H1 (cell line): ENCODE measurements at regions of chr4 and their contacts with region 1.

Region 1: DNA sequence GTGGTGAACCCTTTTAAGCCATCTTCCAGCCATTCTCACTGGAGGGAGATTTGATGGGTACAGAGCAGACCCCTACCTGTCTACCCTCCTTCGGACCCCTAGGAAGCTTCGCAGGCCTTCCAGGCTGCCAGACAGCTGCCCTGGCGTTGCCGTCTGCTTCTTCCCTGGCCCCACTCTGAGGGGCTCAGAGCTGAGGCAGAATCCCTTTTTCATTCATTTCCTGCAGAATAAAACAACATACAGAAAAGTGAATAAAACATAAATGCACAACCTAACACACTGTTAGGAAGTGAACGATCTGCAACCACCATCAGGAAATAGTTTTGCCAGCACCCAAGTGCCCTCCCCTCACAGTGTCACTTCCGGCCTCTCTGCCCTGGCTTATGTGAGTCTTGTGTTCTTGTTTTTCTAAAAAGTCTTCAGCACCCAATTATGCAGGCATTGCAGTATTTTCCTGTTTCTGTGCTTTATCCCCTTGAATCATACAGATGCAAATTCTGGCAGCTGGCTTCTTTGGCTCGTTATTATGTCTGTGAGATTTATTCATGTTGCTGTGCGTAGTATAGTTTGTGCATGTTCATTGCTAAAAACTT is 5.6 kb upstream of the ADD1 start:
- DNase-seq: no peak
- H3K4me3 ChIP-seq: no peak overlapping the region
- H3K27ac ChIP-seq: no peak overlapping the region
- H3K4me1 ChIP-seq: peaks cover 2 to 11% (median 6%) of the 10 kb centered on the region in 4 experiments
- H3K27me3 ChIP-seq: no peaks in the 10 kb centered on the region
- CTCF ChIP-seq: no peak
- EP300 ChIP-seq: no peak
- POLR2A ChIP-seq: no peak
- RAD21 ChIP-seq: no peak

Region 2: GRCh38 chr4:2785613-2786012 is 52.4 kb before region 1 on chr4:
- CTCF ChIA-PET with region 1: no interaction called
- POLR2A ChIA-PET with region 1: no interaction called
- DNase-seq: no peak
- H3K4me3 ChIP-seq: no peak overlapping the region
- H3K27ac ChIP-seq: no peak overlapping the region
- H3K4me1 ChIP-seq: peaks cover 0 to 10% (median 3%) of the 10 kb centered on the region in 4 experiments; a peak in 6 of 7 replicates
- H3K27me3 ChIP-seq: 0 out of 7 replicates have a peak, but pooled peaks cover 0 to 2% (median 0%) of the 10 kb centered on the region in 4 experiments
- CTCF ChIP-seq: no peak
- EP300 ChIP-seq: no peak
- POLR2A ChIP-seq: no peak
- RAD21 ChIP-seq: no peak

Region 3: DNA sequence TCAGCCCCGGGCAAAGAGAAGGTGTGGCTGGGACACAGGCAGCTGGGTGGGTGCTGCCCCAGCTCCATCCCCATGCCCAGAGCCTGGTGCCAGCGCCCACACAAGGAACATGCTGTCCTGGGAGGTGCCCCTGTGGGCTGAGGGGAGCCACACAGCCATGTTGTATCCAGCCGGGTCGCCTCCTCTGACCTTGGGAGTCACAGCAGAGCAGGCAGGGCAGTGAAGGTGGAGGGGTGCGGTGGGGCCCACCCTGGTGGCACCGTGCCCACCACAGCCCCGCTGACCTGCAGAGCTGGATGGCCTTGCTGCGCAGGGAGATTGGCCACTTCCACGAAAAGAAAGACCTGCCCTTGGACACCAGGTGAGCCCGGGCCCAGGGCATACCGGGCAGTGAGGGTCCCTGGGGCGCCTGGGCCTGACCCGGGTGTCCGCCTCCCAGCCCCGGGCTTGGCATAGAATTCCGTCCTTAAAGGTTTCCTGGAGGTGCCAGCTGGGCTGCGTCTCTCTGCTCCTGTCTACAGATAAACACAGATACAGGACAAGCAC is 13.1 kb before region 1 on chr4:
- CTCF ChIA-PET with region 1: interaction called, 5 read pairs
- POLR2A ChIA-PET with region 1: interaction called, 75 read pairs
- DNase-seq: no peak
- H3K4me3 ChIP-seq: no peak overlapping the region
- H3K27ac ChIP-seq: no peak overlapping the region
- H3K4me1 ChIP-seq: peaks cover 0 to 7% (median 4%) of the 10 kb centered on the region in 4 experiments; a peak in 5 of 7 replicates
- H3K27me3 ChIP-seq: no peaks in the 10 kb centered on the region
- CTCF ChIP-seq: no peak
- EP300 ChIP-seq: no peak
- POLR2A ChIP-seq: no peak
- RAD21 ChIP-seq: no peak

Region 4: DNA sequence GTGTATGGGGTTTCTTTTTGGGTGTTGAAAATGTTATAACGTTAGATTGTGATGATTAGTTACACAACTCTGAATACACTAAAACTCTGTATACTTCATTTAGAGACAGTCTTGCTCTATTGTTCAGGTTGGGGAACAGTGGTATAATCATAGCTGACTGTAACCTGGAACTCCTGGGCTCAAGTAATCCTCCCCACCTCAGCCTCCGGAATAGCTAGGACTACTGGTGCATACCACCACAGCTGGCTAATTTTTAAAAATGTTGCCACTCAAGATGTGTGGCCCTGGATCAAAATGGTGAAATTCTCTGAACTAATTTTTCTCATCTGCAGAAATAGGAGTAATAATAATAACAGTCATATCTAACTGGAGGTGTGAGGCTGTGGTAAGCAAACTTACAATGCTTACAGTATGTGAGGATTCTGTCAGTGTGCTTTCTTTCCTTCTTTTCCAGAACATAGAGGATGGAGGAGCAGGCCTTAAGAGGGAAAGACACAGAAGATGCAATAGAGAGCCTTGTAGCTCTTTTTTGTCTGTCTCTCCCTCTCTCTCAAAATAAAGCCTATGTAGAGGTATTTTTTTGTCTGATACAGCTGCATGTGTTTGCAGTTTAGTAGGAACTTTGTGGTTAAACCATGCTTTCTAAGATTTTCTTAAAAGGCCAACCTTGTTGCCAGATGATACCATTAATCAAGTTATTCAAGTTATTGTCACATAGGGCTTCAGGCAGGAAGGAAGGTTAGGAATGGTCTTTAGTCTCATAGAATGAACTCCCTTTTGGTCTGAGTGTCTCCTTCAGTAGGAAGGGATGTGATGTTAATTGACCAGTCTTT is 13.2 kb after region 1 on chr4:
- CTCF ChIA-PET with region 1: interaction called, 3 read pairs
- POLR2A ChIA-PET with region 1: interaction called, 10 read pairs
- DNase-seq: no peak
- H3K4me3 ChIP-seq: no peak overlapping the region
- H3K27ac ChIP-seq: no peak overlapping the region
- H3K4me1 ChIP-seq: peaks cover 0 to 3% (median 0%) of the 10 kb centered on the region in 4 experiments; a peak in 2 of 7 replicates
- H3K27me3 ChIP-seq: no peaks in the 10 kb centered on the region
- CTCF ChIP-seq: no peak
- EP300 ChIP-seq: no peak
- POLR2A ChIP-seq: no peak
- RAD21 ChIP-seq: no peak